ENCODE measurements at regions of chr12 and their contacts with region 1.

Region 1: GRCh38 chr12:124369055-124369900 is 74.4 kb downstream of the RFLNA start:
- DNase-seq: peak; percentile 82
- H3K4me3 ChIP-seq: no peak overlapping the region
- H3K27ac ChIP-seq: peak overlapping the region; percentile 78
- H3K4me1 ChIP-seq: peaks cover 31% of the 10 kb centered on the region
- H3K27me3 ChIP-seq: no peaks in the 10 kb centered on the region
- CTCF ChIP-seq: peak; percentile 22

Region 2: DNA sequence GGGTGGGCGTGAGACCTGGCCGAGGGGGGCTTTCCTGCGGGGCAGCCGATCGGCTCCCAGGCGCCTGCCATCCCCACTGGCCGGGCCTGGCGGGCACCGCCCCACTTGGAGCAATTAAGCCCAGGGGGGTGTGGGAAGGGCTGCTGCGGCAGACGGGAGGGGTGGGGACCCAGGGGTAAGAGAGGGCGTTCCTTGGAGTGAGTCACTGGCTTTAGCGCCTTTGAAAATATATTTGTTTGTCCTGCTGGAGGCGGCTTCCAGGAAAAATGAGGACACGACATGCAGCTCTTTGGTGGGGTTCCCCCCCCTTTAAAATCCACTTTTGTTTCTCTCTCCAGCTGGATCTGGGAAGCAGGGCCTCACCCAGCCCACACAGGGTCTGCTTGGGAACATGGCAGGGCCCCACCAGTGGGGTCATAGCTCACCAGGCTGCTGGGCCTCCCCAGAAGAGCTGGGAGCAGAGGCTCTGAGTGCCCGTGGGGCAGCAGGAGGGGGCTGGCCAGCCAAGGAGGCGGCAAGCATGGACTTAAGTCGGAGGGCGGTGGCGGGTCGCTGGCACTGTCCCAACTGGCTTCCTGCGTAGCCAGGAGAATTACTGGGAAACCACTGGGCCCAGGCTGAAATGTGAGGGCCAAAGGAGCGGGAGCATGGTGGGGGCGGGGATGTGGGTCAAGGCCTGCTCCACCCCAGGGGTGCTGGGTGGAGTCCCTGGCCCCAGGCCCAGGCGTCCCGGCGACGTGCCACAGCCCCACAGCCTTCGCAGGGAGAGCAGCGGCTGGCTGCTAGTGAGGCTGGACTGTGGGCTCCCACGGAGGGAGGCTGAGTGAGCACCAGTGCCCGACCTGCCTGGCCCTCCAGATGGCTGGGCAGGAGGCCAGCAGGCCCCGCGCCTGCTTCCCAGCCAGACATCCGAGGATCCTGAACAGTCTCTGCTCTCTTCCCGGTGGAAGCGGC is 53.6 kb after region 1 on chr12:
- intact Hi-C with region 1: loop called (anchors 10 kb)
- DNase-seq: peak; percentile 94
- H3K4me3 ChIP-seq: peak overlapping the region; percentile 14
- H3K27ac ChIP-seq: peak overlapping the region; percentile 95
- H3K4me1 ChIP-seq: peaks cover 16% of the 10 kb centered on the region
- H3K27me3 ChIP-seq: no peaks in the 10 kb centered on the region
- CTCF ChIP-seq: no peak